ENCODE measurements at regions of chr10 and their contacts with region 1.

Region 1: DNA sequence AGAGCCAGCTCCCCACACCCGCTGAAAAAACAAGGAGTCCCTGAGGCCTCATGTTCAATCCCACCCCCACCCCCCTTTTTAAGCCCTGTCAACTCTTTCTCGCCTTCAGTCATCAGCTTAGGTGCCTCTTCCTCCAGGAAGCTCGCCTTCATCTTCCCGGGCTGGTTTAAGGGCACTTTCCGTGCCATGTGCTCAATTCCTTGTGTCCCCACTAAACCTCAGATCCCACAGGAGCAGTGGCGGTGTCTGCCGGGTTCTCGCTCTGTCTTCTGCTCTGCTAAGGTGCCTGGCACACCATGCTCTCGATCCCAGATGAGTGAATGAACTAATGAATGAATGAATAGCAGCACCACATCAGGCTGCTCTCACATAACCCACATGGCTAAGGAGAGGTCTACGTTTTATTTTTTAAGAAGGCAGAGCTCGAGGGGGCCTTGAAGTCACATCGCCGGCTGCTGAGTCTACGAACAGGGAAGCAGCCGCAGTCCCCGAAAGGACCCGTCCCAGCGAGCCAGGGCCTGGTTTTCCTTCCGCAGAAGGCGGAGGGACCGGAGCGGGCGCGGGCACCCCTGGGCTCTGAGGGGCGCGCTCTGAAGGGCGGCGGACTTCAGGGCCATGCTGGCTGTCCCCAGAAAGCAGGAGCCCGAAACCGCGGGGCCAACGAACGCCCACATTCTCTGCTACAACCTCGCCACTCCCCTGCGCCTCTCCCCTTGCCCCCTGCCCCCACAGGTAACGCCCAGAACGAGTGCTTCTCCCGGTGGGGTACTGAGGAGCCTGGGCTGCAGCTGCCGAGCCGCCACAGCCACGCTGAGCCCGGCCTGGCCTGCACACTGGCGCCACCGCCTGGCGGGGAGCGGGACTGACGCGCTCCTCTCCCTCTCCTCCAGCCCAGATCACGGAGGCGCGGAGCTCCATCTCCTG is 73.4 kb upstream of the KCNMA1 start:
- DNase-seq: no peak
- H3K4me3 ChIP-seq: peak overlapping the region; percentile 59
- H3K27ac ChIP-seq: no peak overlapping the region
- H3K27me3 ChIP-seq: peaks cover 7% of the 10 kb centered on the region
- CTCF ChIP-seq: peak; percentile 95

Region 2: GRCh38 chr10:77173615-77174461 is 537.2 kb before region 1 on chr10:
- CTCF ChIA-PET with region 1: interaction called, 61 read pairs
- POLR2A ChIA-PET with region 1: no interaction called
- DNase-seq: peak; percentile 66
- H3K4me3 ChIP-seq: no peak overlapping the region
- H3K27ac ChIP-seq: no peak overlapping the region
- H3K27me3 ChIP-seq: no peaks in the 10 kb centered on the region
- CTCF ChIP-seq: peak; percentile 93

Region 3: GRCh38 chr10:77641788-77642397 is 69.1 kb before region 1 on chr10:
- CTCF ChIA-PET with region 1: interaction called, 34 read pairs
- POLR2A ChIA-PET with region 1: no interaction called
- DNase-seq: peak; percentile 53
- H3K4me3 ChIP-seq: no peak overlapping the region
- H3K27ac ChIP-seq: no peak overlapping the region
- H3K27me3 ChIP-seq: peaks cover 4% of the 10 kb centered on the region
- CTCF ChIP-seq: peak; percentile 77

Region 4: DNA sequence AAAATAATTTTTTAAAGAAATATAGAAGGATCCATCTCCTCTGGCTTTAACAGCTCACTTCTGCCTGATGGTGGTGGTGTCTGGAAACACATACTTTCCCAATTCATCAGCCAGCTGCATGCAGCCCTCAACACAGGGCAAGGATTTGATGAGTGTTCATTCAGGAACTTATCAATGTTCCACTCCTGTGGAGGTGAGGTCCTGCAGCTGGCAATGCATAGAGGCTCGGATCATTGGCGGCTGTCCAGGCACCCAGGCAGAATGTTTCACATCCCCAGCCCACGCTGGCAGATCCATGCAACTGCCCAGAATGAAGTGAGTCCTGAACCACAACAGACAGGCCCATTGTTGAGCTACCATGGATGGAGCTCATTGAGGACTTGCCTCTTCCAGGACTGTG is 18.2 kb before region 1 on chr10:
- CTCF ChIA-PET with region 1: interaction called, 27 read pairs
- POLR2A ChIA-PET with region 1: no interaction called
- DNase-seq: peak; percentile 63
- H3K4me3 ChIP-seq: no peak overlapping the region
- H3K27ac ChIP-seq: no peak overlapping the region
- H3K27me3 ChIP-seq: peaks cover 26% of the 10 kb centered on the region
- CTCF ChIP-seq: peak; percentile 39

Region 5: GRCh38 chr10:77737608-77738007 is 26.6 kb after region 1 on chr10:
- CTCF ChIA-PET with region 1: interaction called, 13 read pairs
- POLR2A ChIA-PET with region 1: no interaction called
- DNase-seq: peak; percentile 62
- H3K4me3 ChIP-seq: no peak overlapping the region
- H3K27ac ChIP-seq: no peak overlapping the region
- H3K27me3 ChIP-seq: no peaks in the 10 kb centered on the region
- CTCF ChIP-seq: no peak

Region 6: GRCh38 chr10:77907900-77908717 is 197.1 kb after region 1 on chr10:
- CTCF ChIA-PET with region 1: no interaction called
- POLR2A ChIA-PET with region 1: no interaction called
- DNase-seq: no peak
- H3K4me3 ChIP-seq: no peak overlapping the region
- H3K27ac ChIP-seq: no peak overlapping the region
- H3K27me3 ChIP-seq: no peaks in the 10 kb centered on the region
- CTCF ChIP-seq: no peak

Measured in AG04450 (cell line).